ENCODE measurements at regions of chr12 and their contacts with region 1.

Region 1: DNA sequence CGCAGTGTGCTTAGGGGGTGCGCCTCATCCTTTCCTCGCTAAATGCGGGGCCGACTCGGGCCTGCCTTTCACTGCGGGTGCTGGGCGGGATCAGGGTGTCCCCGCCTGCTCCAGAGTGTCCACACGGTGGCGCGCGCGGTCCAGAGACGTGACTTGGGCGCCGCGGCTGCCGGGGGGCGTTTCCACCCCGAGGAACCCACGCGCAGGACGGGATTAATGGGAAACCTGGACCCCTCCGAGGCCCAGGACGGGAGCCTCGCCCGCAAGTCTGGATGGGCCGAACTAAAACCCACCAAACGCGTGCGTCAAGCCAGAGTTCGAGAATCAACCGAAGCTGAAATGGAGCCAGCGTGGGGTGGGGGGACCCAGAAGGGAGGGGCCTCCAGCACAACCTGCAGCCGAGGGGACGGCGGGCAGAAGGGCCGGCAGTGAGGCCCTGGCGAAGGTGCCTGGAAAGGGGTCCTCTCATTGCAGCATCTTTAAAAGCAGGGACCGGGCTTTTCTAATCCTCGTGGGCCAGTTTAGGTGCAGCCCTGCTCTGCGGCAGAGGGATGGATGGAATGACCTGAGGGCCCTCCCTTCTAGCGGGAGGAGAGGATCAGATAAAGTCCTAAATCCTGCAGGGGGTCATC is 93.3 kb downstream of the NINJ2 start:
- DNase-seq: peak; percentile 80 to 97
- H3K4me3 ChIP-seq: peak overlapping the region; percentile 26
- CTCF ChIP-seq: peak in 1 of 3 donors; percentile 61
- POLR2A ChIP-seq: no peak

Region 2: GRCh38 chr12:751192-751998 is 181.5 kb after region 1 on chr12:
- intact Hi-C with region 1: loop called (anchors 5 kb)
- DNase-seq: peak; percentile 86 to 98
- H3K4me3 ChIP-seq: no peak overlapping the region
- CTCF ChIP-seq: peak in 1 of 3 donors; percentile 88
- POLR2A ChIP-seq: no peak

Region 3: GRCh38 chr12:810671-811415 is 240.9 kb after region 1 on chr12:
- intact Hi-C with region 1: loop called (anchors 2 kb)
- DNase-seq: no peak
- H3K4me3 ChIP-seq: no peak overlapping the region
- CTCF ChIP-seq: no peak
- POLR2A ChIP-seq: no peak

Region 4: GRCh38 chr12:949453-950191 is 379.7 kb after region 1 on chr12 and contains the start of gene RAD52:
- intact Hi-C with region 1: loop called (anchors 10 kb)
- DNase-seq: peak; percentile 97 to 99
- H3K4me3 ChIP-seq: peak within 1 kb of the TSS; percentile 79
- CTCF ChIP-seq: peak in 1 of 3 donors; percentile 91
- POLR2A ChIP-seq: peak in 1 of 2 donors; percentile 41
- total RNA-seq, gene RAD52: 6.2 to 16.7 (median 12.1) TPM

Region 5: GRCh38 chr12:1583421-1584078 is 1013.6 kb after region 1 on chr12:
- intact Hi-C with region 1: loop called (anchors 10 kb)
- DNase-seq: peak; percentile 62 to 87
- H3K4me3 ChIP-seq: no peak overlapping the region
- CTCF ChIP-seq: peak in 1 of 3 donors; percentile 72
- POLR2A ChIP-seq: no peak